H1 (cell line): ENCODE measurements at regions of chr4 and their contacts with region 1.

Region 1: DNA sequence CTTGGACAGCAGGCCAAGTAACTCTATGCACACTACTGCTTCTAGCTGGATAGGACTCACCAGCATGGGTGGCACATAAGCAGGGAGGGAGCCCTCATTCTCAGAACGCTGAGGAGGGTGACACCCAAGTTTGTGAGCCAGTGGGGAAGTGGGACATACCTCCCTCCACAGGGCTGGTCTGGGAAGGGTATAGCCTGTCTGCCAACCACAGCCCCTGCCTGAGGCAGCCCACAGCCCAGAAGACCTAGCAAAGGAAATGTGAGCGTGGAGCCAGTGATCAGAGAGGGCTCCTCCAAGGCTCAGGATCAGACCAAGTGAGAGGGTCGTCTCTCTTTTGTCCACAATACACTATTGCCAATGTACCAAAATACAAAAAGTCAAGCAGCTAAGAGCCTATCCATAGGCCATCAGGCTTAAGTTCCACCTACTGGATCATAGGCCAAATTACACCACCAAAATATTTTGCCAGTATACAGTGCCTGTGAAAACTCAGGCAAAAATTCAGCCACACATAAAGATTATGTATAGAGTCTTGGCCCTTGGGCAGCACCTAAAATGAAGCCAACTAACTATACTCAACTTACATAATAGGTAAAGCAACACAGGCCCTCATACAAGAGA is 1203.1 kb downstream of the PCDH18 start:
- DNase-seq: peak in 1 of 2 experiments; percentile 46
- H3K4me3 ChIP-seq: no peak overlapping the region
- H3K27ac ChIP-seq: no peak overlapping the region
- H3K4me1 ChIP-seq: no peaks in the 10 kb centered on the region
- H3K27me3 ChIP-seq: no peaks in the 10 kb centered on the region
- CTCF ChIP-seq: peak in 1 of 3 experiments; percentile 30; a peak in 1 of 4 replicates
- EP300 ChIP-seq: no peak
- POLR2A ChIP-seq: no peak
- RAD21 ChIP-seq: peak; percentile 40 to 59; a peak in 3 of 4 replicates

Region 2: GRCh38 chr4:136314686-136315085 is 14.5 kb before region 1 on chr4:
- CTCF ChIA-PET with region 1: interaction called, 13 read pairs
- POLR2A ChIA-PET with region 1: no interaction called
- DNase-seq: no peak
- H3K4me3 ChIP-seq: no peak overlapping the region
- H3K27ac ChIP-seq: no peak overlapping the region
- H3K4me1 ChIP-seq: peaks cover 0 to 6% (median 0%) of the 10 kb centered on the region in 4 experiments; a peak in 1 of 7 replicates
- H3K27me3 ChIP-seq: no peaks in the 10 kb centered on the region
- CTCF ChIP-seq: no peak
- EP300 ChIP-seq: no peak
- POLR2A ChIP-seq: no peak
- RAD21 ChIP-seq: no peak